ENCODE measurements at regions of chr5 and their contacts with region 1.

Region 1: GRCh38 chr5:61342071-61342501 is 10.0 kb downstream of the ZSWIM6 start:
- DNase-seq: no peak
- ATAC-seq: no peak

Region 2: GRCh38 chr5:61386045-61386800 is 44.1 kb after region 1 on chr5:
- intact Hi-C with region 1: no loop called
- DNase-seq: no peak
- ATAC-seq: no peak

Region 3: GRCh38 chr5:61408476-61409168 is 66.5 kb after region 1 on chr5:
- intact Hi-C with region 1: loop called (anchors 10 kb)
- DNase-seq: peak; percentile 100
- ATAC-seq: peak; percentile 100